Gastrocnemius medialis (tissue), 4 donors: ENCODE measurements at regions of chr13 and their contacts with region 1.

Region 1: DNA sequence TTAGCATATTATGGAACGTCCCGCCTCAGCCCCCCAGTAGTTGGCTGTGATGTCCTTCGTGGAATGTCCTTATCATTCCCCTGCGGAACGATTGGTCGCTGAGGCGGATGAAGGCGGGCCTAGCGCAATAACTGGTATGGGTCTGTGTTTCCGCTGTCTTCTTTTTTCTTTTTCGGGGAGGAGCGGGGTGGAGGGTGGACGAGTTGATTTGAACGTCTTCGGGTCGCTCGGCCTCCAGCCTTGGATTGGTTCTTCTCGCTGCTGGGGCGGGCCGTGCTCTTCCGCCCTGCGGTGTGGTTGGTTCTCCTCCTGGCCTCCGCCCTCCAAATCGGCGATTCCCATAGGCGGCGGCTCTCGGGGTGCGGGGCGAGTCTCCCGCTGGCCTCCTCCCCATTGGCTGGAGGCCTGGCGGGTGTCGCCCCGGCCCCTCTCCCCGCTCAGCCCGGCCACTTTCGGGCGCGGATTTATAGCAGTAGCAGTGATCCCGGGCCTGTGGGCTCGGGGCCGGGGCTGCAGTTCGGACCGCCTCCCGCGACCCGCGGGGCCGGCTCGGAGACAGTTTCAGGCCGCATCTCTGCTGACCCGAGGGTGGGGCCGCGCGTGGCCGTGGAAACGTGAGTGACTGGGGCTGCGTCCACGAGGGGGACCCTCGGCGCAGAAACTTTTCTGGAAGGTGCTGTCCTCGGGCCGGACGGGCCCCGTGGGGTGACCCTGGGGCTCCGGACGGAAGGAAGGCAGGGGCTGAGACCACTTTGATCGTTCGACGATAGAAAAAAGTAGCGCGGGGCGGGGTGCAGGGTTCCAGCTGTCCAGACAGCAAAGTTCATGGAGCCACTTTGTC is 2.1 kb downstream of the ING1 start:
- DNase-seq: peak; percentile 99
- ATAC-seq: peak; percentile 65 to 72
- H3K4me3 ChIP-seq: peak overlapping the region; percentile 85 to 98 (median 94)
- H3K27ac ChIP-seq: peak overlapping the region; percentile 97 to 100 (median 100)
- H3K4me1 ChIP-seq: peaks cover 25 to 30% of the 10 kb centered on the region in 2 donors
- H3K27me3 ChIP-seq: no peaks in the 10 kb centered on the region
- CTCF ChIP-seq: peak in 3 of 5 experiments; percentile 5 to 33 (median 30)
- POLR2A ChIP-seq: peak; percentile 76

Region 2: DNA sequence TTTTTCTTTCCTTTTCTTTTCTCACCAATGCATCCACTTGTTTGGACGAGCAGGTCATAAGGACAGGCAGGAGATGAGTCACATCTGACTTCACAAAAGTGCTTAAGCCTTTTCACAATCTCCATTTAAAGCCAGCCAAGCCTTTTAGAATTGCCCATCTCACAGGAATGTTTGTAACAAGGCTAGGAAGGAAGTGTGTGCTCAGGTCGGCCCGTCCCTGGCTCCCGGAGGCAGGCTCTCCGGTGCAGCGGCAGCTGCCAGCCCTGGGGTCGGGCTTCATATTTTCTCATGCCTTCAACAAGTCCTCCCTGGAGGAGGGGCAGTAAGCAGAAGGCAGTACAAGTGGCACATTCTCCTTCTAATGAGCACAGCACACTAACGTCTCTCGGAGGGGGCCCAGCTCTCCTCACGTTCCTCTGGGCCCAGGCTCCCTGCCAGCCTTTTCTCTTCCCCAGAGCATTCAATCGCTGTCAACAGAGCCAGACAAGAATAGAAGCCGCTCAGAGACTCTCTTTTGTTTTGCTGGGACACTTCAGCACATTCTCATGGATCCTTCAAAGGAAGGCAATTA is 589.1 kb before region 1 on chr13:
- in situ Hi-C with region 1: no loop called
- intact Hi-C with region 1: no loop called
- DNase-seq: peak; percentile 47 to 77
- ATAC-seq: peak; percentile 89 to 93
- H3K4me3 ChIP-seq: peak overlapping the region; percentile 31 to 45 (median 39)
- H3K27ac ChIP-seq: peak overlapping the region; percentile 83 to 95 (median 88)
- H3K4me1 ChIP-seq: peaks cover 33 to 35% of the 10 kb centered on the region in 2 donors
- H3K27me3 ChIP-seq: no peaks in the 10 kb centered on the region
- CTCF ChIP-seq: no peak
- POLR2A ChIP-seq: peak; percentile 43 to 60

Region 3: DNA sequence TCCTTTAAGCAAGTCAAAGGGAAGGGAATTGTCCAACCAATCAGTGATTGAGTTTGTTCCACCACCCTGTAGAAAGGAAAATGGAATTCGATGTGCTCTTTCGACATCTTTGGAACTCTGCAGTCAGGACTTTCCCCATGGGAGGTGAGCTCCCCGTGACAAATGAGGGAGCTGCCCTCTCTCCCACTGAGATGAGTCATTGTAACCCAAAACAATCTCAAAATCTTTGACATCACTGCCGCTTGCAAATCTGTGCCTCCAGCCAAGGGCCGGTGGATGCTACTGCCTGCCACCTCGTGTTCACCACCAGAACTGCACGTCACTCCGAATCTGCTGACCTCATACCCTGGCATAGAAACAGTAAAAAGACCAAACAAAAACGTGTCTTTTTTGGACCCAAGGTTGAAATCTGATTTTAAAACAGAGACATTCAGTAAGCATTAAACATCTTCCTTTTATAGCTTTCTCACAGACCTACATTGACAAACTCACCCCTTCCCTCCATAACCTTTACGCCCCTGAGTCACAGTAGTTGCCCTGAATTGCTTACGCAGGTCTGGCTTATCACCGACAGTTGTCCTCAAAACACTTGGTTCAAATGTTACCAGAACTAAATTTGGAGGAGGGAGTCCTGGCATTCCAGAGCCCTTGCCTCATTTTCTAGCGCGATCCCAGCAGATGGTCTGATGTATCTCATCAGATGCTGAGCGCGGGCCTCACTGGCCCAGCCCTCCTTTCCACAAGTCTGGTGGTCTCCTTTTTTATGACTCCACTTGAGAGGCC is 303.3 kb before region 1 on chr13:
- in situ Hi-C with region 1: no loop called
- intact Hi-C with region 1: loop called (anchors 10 kb)
- DNase-seq: peak; percentile 87 to 93
- ATAC-seq: peak; percentile 88
- H3K4me3 ChIP-seq: peak overlapping the region in 1 of 4 donors; percentile 22
- H3K27ac ChIP-seq: peak overlapping the region; percentile 75 to 87 (median 80)
- H3K4me1 ChIP-seq: peaks cover 59 to 61% of the 10 kb centered on the region in 2 donors
- H3K27me3 ChIP-seq: no peaks in the 10 kb centered on the region
- CTCF ChIP-seq: peak; percentile 81 to 93 (median 84)
- POLR2A ChIP-seq: no peak

Region 4: DNA sequence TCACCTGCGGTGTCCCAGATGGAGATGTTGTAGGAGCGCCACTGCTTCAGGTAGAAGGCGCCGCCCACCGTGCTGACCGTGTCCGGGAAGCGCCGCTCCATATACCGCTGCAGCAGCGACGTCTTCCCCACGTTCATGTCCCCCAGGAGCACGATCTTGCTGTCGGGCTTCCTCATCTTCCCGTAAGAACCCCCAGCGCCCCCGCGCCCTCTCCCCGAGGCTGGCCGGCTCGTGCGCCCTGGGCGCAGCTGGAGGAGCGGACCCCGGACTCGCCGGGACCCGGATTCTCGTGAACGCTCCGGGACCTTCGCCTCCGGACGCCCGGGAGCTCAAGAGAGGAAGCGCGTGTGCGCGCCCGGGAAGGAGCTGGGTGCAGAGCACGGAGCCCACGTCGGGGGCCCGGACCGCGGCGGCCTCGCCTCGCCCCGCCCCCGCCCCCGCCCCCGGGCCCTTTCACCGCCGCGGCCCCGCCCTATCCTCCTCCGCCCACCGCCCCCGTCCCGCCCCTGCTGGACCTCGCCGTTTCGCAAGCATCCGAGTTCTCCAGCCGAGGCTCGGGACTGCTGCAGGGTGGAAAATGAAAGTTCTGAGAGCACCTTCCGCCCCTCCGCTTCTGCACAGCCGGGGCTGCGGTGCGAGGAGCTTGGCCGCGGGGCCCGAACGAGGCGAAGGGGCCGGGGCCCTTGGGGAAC is 154.1 kb before region 1 on chr13 and contains the start of gene RAB20:
- in situ Hi-C with region 1: no loop called
- intact Hi-C with region 1: loop called (anchors 5 kb)
- DNase-seq: peak; percentile 73 to 75
- ATAC-seq: peak; percentile 79 to 85
- H3K4me3 ChIP-seq: peak within 1 kb of the TSS; percentile 75 to 88 (median 84)
- H3K27ac ChIP-seq: peak within 1 kb of the TSS; percentile 75 to 92 (median 84)
- H3K4me1 ChIP-seq: peaks cover 10 to 13% of the 10 kb centered on the region in 2 donors
- H3K27me3 ChIP-seq: no peaks in the 10 kb centered on the region
- CTCF ChIP-seq: no peak
- POLR2A ChIP-seq: peak; percentile 66 to 72
- total RNA-seq, gene RAB20: 0.31 to 9.1 (median 2.0) TPM

Region 5: DNA sequence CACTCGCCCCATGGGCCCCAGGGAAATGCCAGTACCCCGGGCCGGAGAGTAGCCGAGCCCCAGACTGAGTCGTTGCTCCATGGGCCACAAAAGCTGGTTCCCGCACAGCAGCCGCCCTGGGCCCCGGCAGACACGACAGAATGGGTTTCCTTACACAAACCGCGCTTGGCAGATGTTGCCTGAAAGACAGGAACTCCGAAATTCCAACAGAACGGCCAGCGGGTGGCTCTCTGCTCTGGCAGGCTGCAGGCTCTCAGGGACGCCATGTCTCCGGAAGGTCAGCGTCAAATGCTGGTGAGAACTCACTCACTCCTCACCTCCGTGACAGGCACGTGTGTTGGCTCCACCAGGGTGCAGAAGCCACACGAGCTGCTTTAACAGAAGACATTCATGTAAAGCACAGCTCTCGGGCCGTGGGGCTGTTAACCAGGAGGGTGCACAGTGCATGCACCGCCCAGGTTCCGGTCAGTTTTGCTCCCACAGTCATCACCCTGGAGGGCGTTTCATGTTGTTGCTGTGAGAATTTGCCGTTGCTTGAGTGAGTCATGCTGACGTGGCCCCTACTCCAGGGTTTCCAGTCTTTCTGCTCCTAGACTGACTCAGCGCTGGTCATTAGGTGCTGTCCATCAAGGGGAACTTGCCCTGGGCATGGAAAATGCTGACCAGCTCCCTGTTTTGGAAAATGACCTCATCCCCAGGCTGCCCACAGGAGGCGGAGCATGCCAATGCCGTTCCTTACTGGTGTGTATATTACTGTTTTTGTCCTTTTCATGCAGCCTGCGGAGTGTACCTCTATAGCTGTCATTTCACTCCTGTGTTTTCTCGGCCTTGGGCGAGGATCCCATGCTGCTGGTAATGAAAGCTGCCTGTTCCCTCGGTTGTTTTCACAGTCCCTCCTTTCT is 154.4 kb after region 1 on chr13:
- in situ Hi-C with region 1: no loop called
- intact Hi-C with region 1: loop called (anchors 2 kb)
- DNase-seq: peak; percentile 96 to 98
- ATAC-seq: peak; percentile 87 to 88
- H3K4me3 ChIP-seq: peak overlapping the region; percentile 70 to 82 (median 77)
- H3K27ac ChIP-seq: peak overlapping the region; percentile 98 to 99 (median 99)
- H3K4me1 ChIP-seq: peaks cover 42% of the 10 kb centered on the region in 2 donors
- H3K27me3 ChIP-seq: no peaks in the 10 kb centered on the region
- CTCF ChIP-seq: peak; percentile 13 to 53 (median 26)
- POLR2A ChIP-seq: peak; percentile 49 to 80

Region 6: GRCh38 chr13:111153279-111153976 is 437.8 kb after region 1 on chr13:
- in situ Hi-C with region 1: no loop called
- intact Hi-C with region 1: loop called (anchors 10 kb)
- DNase-seq: peak; percentile 84 to 92
- ATAC-seq: peak; percentile 94 to 95
- H3K4me3 ChIP-seq: peak overlapping the region; percentile 72 to 96 (median 90)
- H3K27ac ChIP-seq: peak overlapping the region; percentile 93 to 98 (median 96)
- H3K4me1 ChIP-seq: peaks cover 35 to 48% of the 10 kb centered on the region in 2 donors
- H3K27me3 ChIP-seq: no peaks in the 10 kb centered on the region
- CTCF ChIP-seq: peak in 2 of 5 experiments; percentile 26 to 49
- POLR2A ChIP-seq: peak; percentile 96 to 97